ENCODE measurements at regions of chr4 and their contacts with region 1.

Region 1: GRCh38 chr4:169619959-169620879 is at the start of gene CLCN3:
- DNase-seq: peak; percentile 95
- ATAC-seq: peak; percentile 96
- H3K4me3 ChIP-seq: peak within 1 kb of the TSS; percentile 78 to 80
- H3K27ac ChIP-seq: peak within 1 kb of the TSS; percentile 74
- H3K4me1 ChIP-seq: peaks cover 10 to 29% of the 10 kb centered on the region in 2 experiments; a peak in 3 of 4 replicates
- H3K27me3 ChIP-seq: no peaks in the 10 kb centered on the region
- CTCF ChIP-seq: no peak
- POLR2A ChIP-seq: peak; percentile 71
- RAD21 ChIP-seq: no peak
- total RNA-seq, gene CLCN3: 60.4 TPM

Region 2: GRCh38 chr4:169179609-169180521 is 440.4 kb before region 1 on chr4:
- CTCF ChIA-PET with region 1: no interaction called
- POLR2A ChIA-PET with region 1: no interaction called
- RAD21 ChIA-PET with region 1: no interaction called
- intact Hi-C with region 1: no loop called
- DNase-seq: no peak
- ATAC-seq: no peak
- H3K4me3 ChIP-seq: no peak overlapping the region
- H3K27ac ChIP-seq: no peak overlapping the region
- H3K4me1 ChIP-seq: peaks cover 0 to 17% of the 10 kb centered on the region in 2 experiments; a peak in 2 of 4 replicates
- H3K27me3 ChIP-seq: no peaks in the 10 kb centered on the region
- CTCF ChIP-seq: no peak
- POLR2A ChIP-seq: no peak
- RAD21 ChIP-seq: no peak

Region 3: GRCh38 chr4:169659716-169660670 is 39.8 kb after region 1 on chr4:
- CTCF ChIA-PET with region 1: interaction called, 7 read pairs
- POLR2A ChIA-PET with region 1: interaction called, 12 read pairs
- RAD21 ChIA-PET with region 1: no interaction called
- intact Hi-C with region 1: loop called (anchors 1 kb)
- DNase-seq: peak; percentile 99
- ATAC-seq: peak; percentile 94
- H3K4me3 ChIP-seq: peak overlapping the region; percentile 60 to 63
- H3K27ac ChIP-seq: peak overlapping the region; percentile 79
- H3K4me1 ChIP-seq: peaks cover 32 to 44% of the 10 kb centered on the region in 2 experiments
- H3K27me3 ChIP-seq: no peaks in the 10 kb centered on the region
- CTCF ChIP-seq: no peak
- POLR2A ChIP-seq: no peak
- RAD21 ChIP-seq: no peak

Region 4: GRCh38 chr4:169723207-169723965 is 103.2 kb after region 1 on chr4:
- CTCF ChIA-PET with region 1: no interaction called
- POLR2A ChIA-PET with region 1: interaction called, 4 read pairs
- RAD21 ChIA-PET with region 1: no interaction called
- intact Hi-C with region 1: loop called (anchors 10 kb)
- DNase-seq: no peak
- ATAC-seq: peak; percentile 55; the same call in 1 of the 2 replicates
- H3K4me3 ChIP-seq: no peak overlapping the region
- H3K27ac ChIP-seq: no peak overlapping the region
- H3K4me1 ChIP-seq: no peaks in the 10 kb centered on the region
- H3K27me3 ChIP-seq: no peaks in the 10 kb centered on the region
- CTCF ChIP-seq: peak; percentile 19 to 34 (median 33); a peak in 4 of 6 replicates
- POLR2A ChIP-seq: no peak
- RAD21 ChIP-seq: peak; percentile 61

Region 5: GRCh38 chr4:169854090-169854489 is 233.9 kb after region 1 on chr4:
- CTCF ChIA-PET with region 1: no interaction called
- POLR2A ChIA-PET with region 1: no interaction called
- RAD21 ChIA-PET with region 1: no interaction called
- intact Hi-C with region 1: no loop called
- DNase-seq: no peak
- ATAC-seq: no peak
- H3K4me3 ChIP-seq: no peak overlapping the region
- H3K27ac ChIP-seq: no peak overlapping the region
- H3K4me1 ChIP-seq: no peaks in the 10 kb centered on the region
- H3K27me3 ChIP-seq: no peaks in the 10 kb centered on the region
- CTCF ChIP-seq: no peak
- POLR2A ChIP-seq: no peak
- RAD21 ChIP-seq: no peak

Measured in HCT116 (cell line).